Right ventricle myocardium inferior (tissue), 1 donor: ENCODE measurements at regions of chr3 and their contacts with region 1.

Region 1: DNA sequence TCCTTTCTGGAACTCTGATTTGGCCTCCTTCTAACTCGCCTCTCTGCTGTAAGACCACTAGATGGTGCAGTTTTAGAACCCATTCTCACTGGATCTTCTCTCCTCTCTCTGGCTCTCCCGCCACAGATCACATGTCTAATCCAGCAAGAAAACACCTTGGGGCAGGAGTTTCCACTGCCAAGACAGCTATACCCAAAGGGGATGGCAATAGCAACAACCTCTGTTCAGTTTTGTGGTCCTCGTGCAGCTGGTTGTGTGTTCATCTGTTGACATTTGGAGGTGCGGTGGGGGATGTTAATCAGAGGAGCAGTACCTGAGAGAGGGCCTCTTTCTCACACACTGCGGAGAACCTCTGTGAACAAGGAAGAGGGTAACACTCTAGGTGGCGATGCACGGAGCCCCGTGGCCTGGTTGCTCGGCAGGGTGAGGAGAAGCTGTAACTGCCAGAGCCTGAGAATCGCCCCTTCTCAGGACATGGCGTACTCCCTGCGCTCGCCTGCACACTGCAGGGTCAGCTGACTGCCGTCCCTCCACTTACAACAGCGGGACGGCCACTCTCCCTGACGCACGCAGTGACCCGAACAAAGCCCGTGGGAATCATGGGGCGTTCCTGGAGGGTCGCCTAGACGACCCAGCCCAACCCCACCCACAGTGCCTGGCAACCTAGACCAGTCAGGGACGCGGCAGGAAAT is at the start of gene TEX55:
- DNase-seq: no peak
- ATAC-seq: peak; percentile 46
- total RNA-seq, gene TEX55: not detected

Region 2: DNA sequence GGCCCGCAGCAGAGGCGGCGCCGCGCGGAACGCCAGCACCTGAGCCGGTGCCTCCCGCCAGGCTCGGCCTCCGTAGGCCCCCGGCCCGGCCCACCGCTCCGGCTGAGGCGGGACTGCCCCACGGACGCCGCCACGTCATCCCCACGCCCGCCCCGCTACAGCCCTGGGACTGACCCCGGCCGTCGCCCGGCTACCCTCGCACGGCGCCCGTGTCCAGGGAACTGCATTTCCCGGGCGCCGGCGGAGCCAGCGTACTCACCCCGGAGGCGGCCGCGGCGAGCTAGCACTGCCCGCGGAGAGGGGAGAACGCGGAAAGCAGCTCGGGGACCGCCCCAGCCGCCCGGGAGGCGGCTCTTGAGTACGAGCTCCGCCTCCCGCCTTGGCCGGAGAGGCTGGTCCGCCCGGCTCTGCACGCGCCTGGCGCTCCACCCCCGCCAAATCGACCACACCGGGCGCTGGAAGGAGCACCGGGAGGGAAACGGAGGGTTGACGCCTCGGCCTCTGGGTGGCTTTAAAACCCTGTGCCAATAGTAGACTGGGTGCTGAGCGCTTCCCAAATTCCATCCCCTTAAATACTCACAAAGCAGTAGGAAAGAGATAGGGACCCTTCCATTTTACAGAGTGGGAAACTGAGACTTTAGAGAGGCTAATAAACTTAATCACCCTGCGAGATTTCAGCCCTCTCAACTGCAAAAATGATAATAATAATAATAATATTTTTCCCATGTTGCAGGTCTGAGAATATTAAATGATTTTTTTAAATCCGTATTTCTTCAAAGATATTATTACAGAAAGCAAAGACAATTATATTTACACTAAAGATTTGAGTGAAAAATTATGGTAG is 95.2 kb after region 1 on chr3 and contains the start of gene B4GALT4:
- intact Hi-C with region 1: loop called (anchors 1 kb)
- DNase-seq: peak; percentile 96
- ATAC-seq: peak; percentile 97
- total RNA-seq, gene B4GALT4: 12.0 TPM